MCF 10A (cell line): ENCODE measurements at regions of chr1 and their contacts with region 1.

Region 1: GRCh38 chr1:156608036-156608674 is 6.9 kb upstream of the GPATCH4 start:
- DNase-seq: peak; percentile 87
- H3K4me3 Mint-ChIP-seq: no peak overlapping the region
- H3K27ac Mint-ChIP-seq: no peak overlapping the region
- H3K4me1 Mint-ChIP-seq: no peaks in the 10 kb centered on the region
- H3K27me3 Mint-ChIP-seq: peaks cover 24% of the 10 kb centered on the region
- CTCF ChIP-seq: peak; percentile 89

Region 2: DNA sequence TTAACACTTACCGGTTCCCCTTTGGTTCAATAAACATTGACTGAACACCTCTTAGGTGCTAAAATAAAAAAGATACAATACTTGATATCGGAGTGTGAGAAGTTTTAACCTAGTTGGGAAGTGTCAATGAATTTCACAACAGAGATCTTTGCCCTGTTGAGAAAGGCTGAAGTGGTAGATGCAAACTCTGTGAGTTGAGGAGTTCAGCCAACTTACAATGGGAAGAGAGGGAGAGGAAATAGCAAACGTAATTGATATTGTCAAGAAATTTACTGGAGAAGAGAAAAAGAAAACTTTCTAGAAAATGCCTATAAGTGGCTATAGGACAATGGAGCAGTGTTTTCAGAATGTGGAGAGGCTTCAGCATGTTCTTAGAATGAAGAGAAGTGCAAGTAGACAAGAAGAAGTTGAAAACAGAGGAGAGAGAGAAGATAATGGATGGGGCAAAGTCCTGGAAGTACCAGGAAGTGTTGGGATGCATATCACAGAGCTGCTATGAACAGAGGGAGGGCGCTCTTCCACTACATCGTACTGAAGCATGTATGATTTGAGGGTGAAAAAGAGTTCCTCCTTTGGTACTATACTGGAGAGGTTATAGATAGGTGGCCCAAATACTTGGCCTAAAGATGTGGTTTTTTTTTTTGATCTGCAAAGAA is 156.5 kb before region 1 on chr1:
- CTCF ChIA-PET with region 1: interaction called, 19 read pairs
- POLR2A ChIA-PET with region 1: interaction called, 8 read pairs
- intact Hi-C with region 1: loop called (anchors 1 kb)
- DNase-seq: no peak
- H3K4me3 Mint-ChIP-seq: no peak overlapping the region
- H3K27ac Mint-ChIP-seq: no peak overlapping the region
- H3K4me1 Mint-ChIP-seq: peaks cover 6% of the 10 kb centered on the region
- H3K27me3 Mint-ChIP-seq: peaks cover 9% of the 10 kb centered on the region
- CTCF ChIP-seq: no peak

Region 3: GRCh38 chr1:156489166-156489934 is 118.8 kb before region 1 on chr1:
- CTCF ChIA-PET with region 1: interaction called, 10 read pairs
- POLR2A ChIA-PET with region 1: no interaction called
- intact Hi-C with region 1: no loop called
- DNase-seq: no peak
- H3K4me3 Mint-ChIP-seq: peak overlapping the region; percentile 44
- H3K27ac Mint-ChIP-seq: peak overlapping the region; percentile 74
- H3K4me1 Mint-ChIP-seq: peaks cover 74% of the 10 kb centered on the region
- H3K27me3 Mint-ChIP-seq: no peaks in the 10 kb centered on the region
- CTCF ChIP-seq: no peak

Region 4: DNA sequence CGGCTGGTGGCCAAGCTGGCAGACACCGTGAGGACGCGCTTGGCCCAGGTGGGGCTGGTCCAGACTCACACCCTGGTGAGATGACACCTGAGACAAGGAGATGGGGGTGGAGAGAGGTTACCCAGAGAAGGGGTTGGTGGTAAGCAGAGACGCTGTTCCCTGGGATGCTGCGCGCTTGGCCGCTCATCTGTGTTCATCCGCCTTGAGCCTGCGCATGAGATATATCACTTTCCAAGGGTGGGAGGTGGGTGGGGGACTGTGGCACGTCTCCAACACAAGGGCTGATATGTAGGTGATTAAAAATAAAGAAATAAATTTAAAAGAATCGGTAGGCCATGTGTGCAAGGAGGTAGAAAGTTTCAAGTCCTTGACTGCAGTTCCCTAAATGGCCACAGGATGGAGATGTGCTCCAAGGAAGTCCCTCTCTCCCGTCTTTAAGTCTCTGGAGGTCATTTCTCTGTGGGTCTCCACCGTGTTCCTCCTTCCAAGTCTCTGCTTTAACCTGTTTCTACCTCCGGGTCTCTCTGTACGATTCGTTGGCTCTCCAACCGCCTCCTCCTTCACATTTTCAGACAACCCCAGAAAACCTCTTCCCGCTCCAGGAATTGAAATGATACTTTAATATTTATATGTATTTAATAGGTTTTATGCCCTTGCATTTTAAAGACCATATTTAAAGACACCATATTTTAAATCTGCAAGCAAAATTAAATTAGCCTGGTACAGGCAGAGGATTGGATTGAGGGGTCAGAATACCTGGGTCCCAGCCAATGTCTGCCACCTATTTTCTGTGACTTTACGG is 24.1 kb before region 1 on chr1:
- CTCF ChIA-PET with region 1: interaction called, 64 read pairs
- POLR2A ChIA-PET with region 1: interaction called, 134 read pairs
- intact Hi-C with region 1: loop called (anchors 1 kb)
- DNase-seq: peak; percentile 89
- H3K4me3 Mint-ChIP-seq: no peak overlapping the region
- H3K27ac Mint-ChIP-seq: peak overlapping the region; percentile 75
- H3K4me1 Mint-ChIP-seq: peaks cover 6% of the 10 kb centered on the region
- H3K27me3 Mint-ChIP-seq: no peaks in the 10 kb centered on the region
- CTCF ChIP-seq: peak; percentile 98

Region 5: GRCh38 chr1:156591432-156592157 is 16.6 kb before region 1 on chr1 and contains the start of gene NAXE:
- CTCF ChIA-PET with region 1: interaction called, 64 read pairs
- POLR2A ChIA-PET with region 1: interaction called, 134 read pairs
- intact Hi-C with region 1: no loop called
- DNase-seq: peak; percentile 77
- H3K4me3 Mint-ChIP-seq: peak within 1 kb of the TSS; percentile 77
- H3K27ac Mint-ChIP-seq: peak within 1 kb of the TSS; percentile 65
- H3K4me1 Mint-ChIP-seq: peaks cover 13% of the 10 kb centered on the region
- H3K27me3 Mint-ChIP-seq: no peaks in the 10 kb centered on the region
- CTCF ChIP-seq: no peak
- total RNA-seq, gene NAXE: 141 and 155 TPM in 2 replicates

Region 6: GRCh38 chr1:156740679-156741612 is 132.8 kb after region 1 on chr1 and contains the start of gene MRPL24:
- CTCF ChIA-PET with region 1: no interaction called
- POLR2A ChIA-PET with region 1: no interaction called
- intact Hi-C with region 1: no loop called
- DNase-seq: peak; percentile 100
- H3K4me3 Mint-ChIP-seq: peak within 1 kb of the TSS; percentile 100
- H3K27ac Mint-ChIP-seq: peak within 1 kb of the TSS; percentile 98
- H3K4me1 Mint-ChIP-seq: peaks cover 30% of the 10 kb centered on the region
- H3K27me3 Mint-ChIP-seq: no peaks in the 10 kb centered on the region
- CTCF ChIP-seq: no peak
- total RNA-seq, gene MRPL24: 233 and 261 TPM in 2 replicates